Naive thymus-derived CD8-positive, alpha-beta T cell (primary cell): ENCODE measurements at regions of chr1 and their contacts with region 1.

Region 1: DNA sequence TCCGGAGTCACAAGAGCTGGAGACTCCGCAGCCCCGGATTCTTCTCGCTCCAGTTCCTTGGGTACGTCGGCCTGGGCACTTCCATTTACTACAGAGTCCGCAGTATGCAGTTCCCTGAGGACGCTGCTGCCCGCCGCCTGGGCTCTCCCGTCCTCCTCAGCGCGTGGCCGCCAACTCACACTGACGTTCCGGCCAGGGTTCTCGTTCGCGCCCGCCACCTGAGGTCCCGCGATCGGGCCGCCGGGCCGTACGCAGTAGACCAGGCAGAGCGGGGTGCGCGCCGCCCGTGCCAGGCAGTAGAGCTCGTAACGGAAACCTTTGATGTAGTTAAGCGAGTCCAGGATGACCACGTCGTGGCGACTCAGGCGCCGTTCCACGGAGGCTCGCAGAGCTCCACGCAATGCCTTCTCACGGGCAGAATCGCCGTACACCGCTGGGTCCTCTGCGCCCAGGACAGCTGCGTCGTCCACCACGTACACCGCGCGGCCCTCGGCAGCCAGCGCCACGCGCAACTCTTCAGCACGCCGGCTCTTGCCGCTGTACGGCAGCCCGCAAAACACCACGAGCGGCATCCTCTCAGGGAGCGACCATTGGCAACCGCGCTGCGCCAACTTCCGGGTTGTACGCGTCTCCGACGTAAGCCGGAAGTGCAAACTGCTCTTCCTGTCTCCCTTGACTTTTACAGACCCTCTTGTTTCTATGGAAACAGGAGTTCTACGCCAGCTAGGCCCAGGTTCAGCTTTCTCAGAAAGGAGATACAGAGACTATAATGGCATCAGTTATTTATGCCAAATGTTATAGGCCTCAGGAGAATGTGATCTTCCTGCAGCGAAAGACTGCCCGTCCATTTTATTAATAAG is at the start of gene KTI12:
- DNase-seq: peak; percentile 78 to 96 (median 90)
- ATAC-seq: peak; percentile 93
- H3K4me3 Mint-ChIP-seq: peak within 1 kb of the TSS; percentile 89 to 95 (median 92)
- H3K27ac Mint-ChIP-seq: peak within 1 kb of the TSS; percentile 94 to 99 (median 97)
- H3K4me1 Mint-ChIP-seq: peaks cover 16 to 46% (median 41%) of the 10 kb centered on the region in 4 donors
- H3K27me3 Mint-ChIP-seq: no peaks in the 10 kb centered on the region
- polyA plus RNA-seq, gene KTI12: 42.2 to 47.5 (median 44.0) TPM

Region 2: GRCh38 chr1:52056163-52056936 is 22.9 kb after region 1 on chr1 and contains the start of gene BTF3L4:
- POLR2A ChIA-PET with region 1: interaction called, 55 read pairs
- DNase-seq: peak; percentile 85 to 95 (median 91)
- ATAC-seq: peak; percentile 93 to 95
- H3K4me3 Mint-ChIP-seq: peak within 1 kb of the TSS; percentile 88 to 100 (median 99)
- H3K27ac Mint-ChIP-seq: peak within 1 kb of the TSS; percentile 92 to 98 (median 97)
- H3K4me1 Mint-ChIP-seq: peaks cover 39 to 73% (median 68%) of the 10 kb centered on the region in 4 donors
- H3K27me3 Mint-ChIP-seq: no peaks in the 10 kb centered on the region
- polyA plus RNA-seq, gene BTF3L4: 61.9 to 71.0 (median 68.4) TPM